Gastrocnemius medialis (tissue), 4 donors: ENCODE measurements at regions of chr1 and their contacts with region 1.

Region 1: DNA sequence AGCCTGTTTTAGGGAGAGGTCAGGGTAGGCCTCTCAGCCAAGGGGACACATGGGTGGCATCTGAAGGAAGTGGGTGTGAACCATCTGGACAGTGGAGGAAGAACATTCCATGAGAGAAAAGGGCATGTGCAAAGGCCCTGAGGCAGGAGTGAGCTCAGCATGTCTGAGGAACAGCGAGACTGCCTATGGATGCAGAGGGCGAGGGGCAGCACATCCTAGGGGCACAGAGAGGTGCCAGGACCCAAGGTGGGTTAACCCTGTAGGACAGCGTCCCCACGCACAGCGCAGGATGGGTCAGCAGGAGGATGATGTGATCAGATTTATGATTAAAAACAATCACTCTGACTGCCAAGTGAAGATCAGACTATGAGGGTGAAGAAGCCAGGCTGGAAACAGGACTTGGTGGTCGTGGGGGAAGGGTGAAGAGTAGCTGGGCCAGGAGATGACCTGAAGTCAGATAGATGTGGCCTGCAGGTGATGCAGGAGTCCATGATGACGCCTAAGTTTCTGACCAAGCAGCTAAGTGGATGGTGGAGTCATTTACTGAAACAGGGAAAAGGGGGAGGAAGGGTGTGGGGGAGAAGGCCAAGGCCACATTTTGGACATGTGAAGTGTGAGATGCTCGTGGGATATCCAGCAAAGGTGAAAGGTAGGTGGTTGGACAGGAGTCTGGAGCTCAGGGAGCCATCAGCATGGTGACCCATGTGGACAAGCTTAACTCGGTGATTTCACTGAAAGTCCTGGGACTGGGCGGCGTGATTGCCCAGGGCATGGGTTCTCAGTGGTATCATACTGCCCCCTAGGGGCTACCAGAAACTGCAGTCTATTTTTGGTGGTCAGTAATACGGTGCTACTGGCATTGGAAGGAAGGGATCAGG is 37.8 kb downstream of the PABPC4 start:
- DNase-seq: peak; percentile 48 to 73
- ATAC-seq: peak; percentile 68 to 82
- H3K4me3 ChIP-seq: no peak overlapping the region
- H3K27ac ChIP-seq: peak overlapping the region; percentile 81 to 85 (median 82)
- H3K4me1 ChIP-seq: peaks cover 10 to 19% of the 10 kb centered on the region in 2 donors
- H3K27me3 ChIP-seq: no peaks in the 10 kb centered on the region
- CTCF ChIP-seq: peak; percentile 73 to 88 (median 84)
- POLR2A ChIP-seq: no peak

Region 2: GRCh38 chr1:39398278-39399021 is 140.4 kb before region 1 on chr1:
- in situ Hi-C with region 1: no loop called
- intact Hi-C with region 1: no loop called
- DNase-seq: peak in 1 of 2 donors; percentile 55
- ATAC-seq: peak; percentile 71 to 77
- H3K4me3 ChIP-seq: no peak overlapping the region
- H3K27ac ChIP-seq: peak overlapping the region; percentile 38 to 61 (median 46)
- H3K4me1 ChIP-seq: peaks cover 26 to 33% of the 10 kb centered on the region in 2 donors
- H3K27me3 ChIP-seq: no peaks in the 10 kb centered on the region
- CTCF ChIP-seq: no peak
- POLR2A ChIP-seq: no peak

Region 3: GRCh38 chr1:39488793-39489566 is 49.8 kb before region 1 on chr1:
- in situ Hi-C with region 1: no loop called
- intact Hi-C with region 1: loop called (anchors 5 kb)
- DNase-seq: no peak
- ATAC-seq: no peak
- H3K4me3 ChIP-seq: no peak overlapping the region
- H3K27ac ChIP-seq: no peak overlapping the region
- H3K4me1 ChIP-seq: no peaks in the 10 kb centered on the region
- H3K27me3 ChIP-seq: peaks cover 15 to 23% (median 19%) of the 10 kb centered on the region in 3 donors
- CTCF ChIP-seq: no peak
- POLR2A ChIP-seq: no peak

Region 4: GRCh38 chr1:39575191-39576015 is 36.6 kb after region 1 on chr1:
- in situ Hi-C with region 1: no loop called
- intact Hi-C with region 1: loop called (anchors 2 kb)
- DNase-seq: peak; percentile 63 to 69
- ATAC-seq: peak; percentile 9 to 28
- H3K4me3 ChIP-seq: peak overlapping the region; percentile 70 to 96 (median 78)
- H3K27ac ChIP-seq: peak overlapping the region; percentile 93 to 99 (median 96)
- H3K4me1 ChIP-seq: peaks cover 33% of the 10 kb centered on the region in 2 donors
- H3K27me3 ChIP-seq: no peaks in the 10 kb centered on the region
- CTCF ChIP-seq: no peak
- POLR2A ChIP-seq: peak in 1 of 2 donors; percentile 39

Region 5: DNA sequence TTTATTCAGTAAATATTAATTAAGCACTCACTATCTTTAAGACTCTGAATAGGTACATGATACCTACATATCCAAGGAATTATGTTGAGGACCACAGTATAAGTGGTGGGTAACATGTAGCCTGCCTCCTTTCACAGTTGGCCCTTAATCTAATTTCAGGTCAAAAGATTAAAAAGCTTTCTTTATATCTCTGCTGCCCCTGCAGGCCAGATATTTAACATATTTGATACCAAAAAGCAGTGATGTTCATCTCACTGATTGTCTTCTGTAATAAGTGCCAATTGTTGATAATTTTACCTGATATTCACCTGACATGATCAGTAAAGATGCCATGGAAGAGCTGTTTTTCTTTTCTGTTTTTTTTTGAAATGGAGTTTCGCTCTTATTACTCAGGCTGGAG is 658.8 kb after region 1 on chr1:
- in situ Hi-C with region 1: no loop called
- intact Hi-C with region 1: no loop called
- DNase-seq: no peak
- ATAC-seq: no peak
- H3K4me3 ChIP-seq: no peak overlapping the region
- H3K27ac ChIP-seq: no peak overlapping the region
- H3K4me1 ChIP-seq: no peaks in the 10 kb centered on the region
- H3K27me3 ChIP-seq: no peaks in the 10 kb centered on the region
- CTCF ChIP-seq: no peak
- POLR2A ChIP-seq: no peak